Activated naive CD4-positive, alpha-beta T cell treated with anti-CD3 and anti-CD28 coated beads for 36 hours (primary cell): ENCODE measurements at regions of chr10 and their contacts with region 1.

Region 1: DNA sequence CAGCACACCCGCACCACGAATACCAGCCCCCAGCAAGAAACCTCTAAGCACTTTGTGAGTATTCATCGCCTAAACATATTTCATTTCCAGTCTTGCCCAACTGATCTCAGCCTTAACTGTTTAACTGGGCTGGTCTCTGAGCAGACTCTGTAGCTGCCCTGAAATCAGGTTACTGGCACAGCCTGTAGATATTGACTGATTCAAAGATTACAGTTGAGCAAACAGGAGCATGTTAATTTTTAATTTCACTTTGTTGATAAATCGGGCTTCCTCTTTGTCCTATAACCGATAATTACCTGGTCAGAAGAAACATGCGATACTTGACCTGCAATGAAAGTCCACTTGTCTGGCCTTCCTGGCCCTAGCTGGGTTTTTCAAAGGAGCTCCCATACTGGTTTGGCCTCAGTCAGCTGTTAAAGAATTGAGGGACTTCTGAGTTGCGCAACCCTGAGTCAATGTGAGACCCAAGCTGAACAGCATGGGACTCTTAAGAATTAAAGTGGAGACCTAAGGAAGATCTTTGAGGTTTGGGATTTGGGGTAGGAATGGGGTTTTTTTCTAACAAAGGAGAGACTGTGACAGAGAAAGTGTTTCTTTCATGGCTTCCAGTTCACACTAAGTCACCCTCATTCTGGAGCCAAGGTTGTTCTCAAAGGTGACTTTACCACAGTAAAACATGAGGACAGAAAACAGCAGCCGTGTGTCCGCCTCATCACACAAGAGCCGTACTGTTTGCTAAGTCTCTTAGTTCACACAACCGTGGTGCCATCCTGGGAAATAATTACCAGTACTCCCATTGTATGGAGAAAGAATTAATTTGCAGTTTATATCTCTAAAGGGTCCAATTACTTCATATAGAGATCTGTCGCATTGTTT is 75.9 kb downstream of the PPP1R3C start:
- DNase-seq: no peak
- H3K4me3 Mint-ChIP-seq: no peak overlapping the region
- H3K27ac Mint-ChIP-seq: no peak overlapping the region
- H3K4me1 Mint-ChIP-seq: no peaks in the 10 kb centered on the region
- H3K27me3 Mint-ChIP-seq: peaks cover 3% of the 10 kb centered on the region

Region 2: DNA sequence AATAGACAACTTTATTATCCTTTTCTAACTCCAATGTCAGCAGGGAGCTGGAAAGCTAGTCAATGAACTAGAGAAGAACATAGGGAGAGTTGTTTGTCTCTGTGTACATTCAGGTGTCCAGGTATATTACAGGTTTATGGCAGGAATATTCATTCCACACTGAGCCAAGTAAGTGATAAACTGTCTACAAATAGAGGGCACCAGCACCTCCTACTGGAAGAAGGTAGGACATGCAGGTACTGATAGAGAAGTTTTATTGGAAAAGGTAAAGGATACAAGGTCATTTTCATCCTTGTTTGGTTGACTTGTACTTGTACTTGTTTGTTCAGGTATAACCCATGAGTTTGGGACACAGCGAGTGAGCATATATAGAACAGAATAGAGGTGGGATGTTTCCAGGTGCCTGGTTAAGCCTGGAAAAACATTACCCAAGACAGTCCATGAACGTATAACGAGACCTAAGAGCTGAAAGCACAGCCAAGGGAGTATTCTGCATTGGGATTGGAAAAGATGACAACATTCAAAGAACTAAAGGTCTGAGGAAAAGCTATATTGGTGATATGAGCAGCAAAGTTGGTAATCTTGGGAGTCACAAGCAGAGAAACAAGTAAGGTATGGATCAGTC is 137.4 kb after region 1 on chr10:
- CTCF ChIA-PET with region 1: interaction called, 3 read pairs
- intact Hi-C with region 1: loop called (anchors 2 kb)
- DNase-seq: peak; percentile 37
- H3K4me3 Mint-ChIP-seq: no peak overlapping the region
- H3K27ac Mint-ChIP-seq: no peak overlapping the region
- H3K4me1 Mint-ChIP-seq: peaks cover 4% of the 10 kb centered on the region
- H3K27me3 Mint-ChIP-seq: peaks cover 5% of the 10 kb centered on the region